ENCODE measurements at regions of chr11 and their contacts with region 1.

Region 1: DNA sequence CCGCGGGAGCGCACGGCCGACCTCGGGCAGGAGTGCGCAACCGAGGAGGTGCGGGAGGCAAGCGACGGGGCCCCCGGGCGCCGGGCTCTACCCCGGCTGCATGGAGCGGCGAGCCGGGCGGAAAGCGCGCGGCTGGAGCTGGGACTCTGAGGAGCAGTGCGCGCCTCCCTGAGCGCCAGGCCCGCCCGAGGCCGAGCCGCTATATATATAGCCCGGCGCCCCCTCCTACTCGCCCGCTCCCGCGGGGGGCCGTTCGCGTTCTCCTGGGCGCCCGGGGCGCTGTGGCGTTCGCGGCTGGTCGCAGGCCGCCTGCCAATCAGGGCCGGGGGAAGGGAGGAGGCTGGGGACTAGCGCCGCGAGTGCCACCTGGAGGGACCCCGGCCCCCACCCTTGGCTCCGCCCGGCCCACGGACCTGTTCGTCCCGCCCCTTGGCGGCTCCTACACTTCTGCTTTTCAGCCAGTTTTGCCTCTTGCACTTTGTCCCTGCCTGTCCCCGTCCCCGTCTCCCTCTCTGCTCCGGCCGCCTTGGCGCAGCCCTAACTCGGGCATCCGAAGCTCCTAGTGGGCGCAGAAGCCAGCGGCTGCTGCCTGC is at the start of gene FGF4:
- DNase-seq: peak; percentile 21 to 83
- H3K4me3 ChIP-seq: peak within 1 kb of the TSS; percentile 23 to 60 (median 36)
- H3K27ac ChIP-seq: no peak within 1 kb of the TSS
- H3K4me1 ChIP-seq: peaks cover 11 to 36% (median 28%) of the 10 kb centered on the region in 4 experiments
- H3K27me3 ChIP-seq: peaks cover 20 to 50% (median 46%) of the 10 kb centered on the region in 4 experiments
- CTCF ChIP-seq: no peak
- EP300 ChIP-seq: no peak
- POLR2A ChIP-seq: no peak
- RAD21 ChIP-seq: no peak
- total RNA-seq, gene FGF4: 2.0 TPM in 2 replicates

Region 2: GRCh38 chr11:69443138-69443967 is 331.9 kb before region 1 on chr11:
- CTCF ChIA-PET with region 1: no interaction called
- POLR2A ChIA-PET with region 1: no interaction called
- DNase-seq: peak; percentile 70 to 91
- H3K4me3 ChIP-seq: peak overlapping the region in 1 of 4 experiments; percentile 38; a peak in 1 of 8 replicates
- H3K27ac ChIP-seq: 0 out of 2 replicates have a peak overlapping the region, but pooled peaks have one; percentile 3
- H3K4me1 ChIP-seq: peaks cover 13 to 37% (median 33%) of the 10 kb centered on the region in 4 experiments
- H3K27me3 ChIP-seq: no peaks in the 10 kb centered on the region; a peak in 2 of 7 replicates
- CTCF ChIP-seq: peak in 1 of 3 experiments; percentile 13; a peak in 1 of 4 replicates
- EP300 ChIP-seq: no peak
- POLR2A ChIP-seq: peak in 1 of 2 experiments; percentile 64; a peak in 1 of 3 replicates
- RAD21 ChIP-seq: peak in 1 of 2 experiments; percentile 0; a peak in 1 of 4 replicates

Region 3: DNA sequence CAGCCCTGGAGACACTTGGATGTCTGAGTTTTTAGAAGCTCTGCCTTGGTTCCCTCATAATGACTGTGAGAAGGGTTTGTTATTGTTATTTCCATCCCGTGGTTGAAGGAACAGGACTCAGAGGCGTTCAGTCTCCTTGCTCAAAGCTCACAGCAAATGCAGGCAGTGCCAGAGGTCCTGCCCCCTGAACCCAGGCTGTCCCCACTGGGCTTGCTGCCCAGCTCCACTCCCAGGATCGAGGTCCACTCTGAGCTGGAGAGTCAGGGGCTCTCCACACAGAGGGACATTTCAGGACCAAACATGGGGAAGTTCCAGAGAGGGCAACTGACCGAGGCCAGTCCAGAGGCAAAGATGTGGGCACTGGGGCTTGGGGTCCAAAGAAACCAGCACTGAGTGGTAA is 14.9 kb before region 1 on chr11:
- CTCF ChIA-PET with region 1: interaction called, 10 read pairs
- POLR2A ChIA-PET with region 1: interaction called, 3 read pairs
- DNase-seq: no peak
- H3K4me3 ChIP-seq: no peak overlapping the region
- H3K27ac ChIP-seq: no peak overlapping the region
- H3K4me1 ChIP-seq: peaks cover 0 to 6% (median 0%) of the 10 kb centered on the region in 4 experiments; a peak in 1 of 7 replicates
- H3K27me3 ChIP-seq: no peaks in the 10 kb centered on the region; a peak in 1 of 7 replicates
- CTCF ChIP-seq: no peak
- EP300 ChIP-seq: no peak
- POLR2A ChIP-seq: no peak
- RAD21 ChIP-seq: no peak

Region 4: GRCh38 chr11:69791276-69792180 is 16.3 kb after region 1 on chr11:
- CTCF ChIA-PET with region 1: interaction called, 17 read pairs
- POLR2A ChIA-PET with region 1: interaction called, 6 read pairs
- DNase-seq: no peak
- H3K4me3 ChIP-seq: no peak overlapping the region
- H3K27ac ChIP-seq: no peak overlapping the region
- H3K4me1 ChIP-seq: peaks cover 0 to 11% (median 2%) of the 10 kb centered on the region in 4 experiments; a peak in 2 of 7 replicates
- H3K27me3 ChIP-seq: no peaks in the 10 kb centered on the region
- CTCF ChIP-seq: no peak
- EP300 ChIP-seq: no peak
- POLR2A ChIP-seq: no peak
- RAD21 ChIP-seq: no peak

Region 5: GRCh38 chr11:69972351-69972802 is 197.1 kb after region 1 on chr11:
- CTCF ChIA-PET with region 1: no interaction called
- POLR2A ChIA-PET with region 1: no interaction called
- DNase-seq: no peak
- H3K4me3 ChIP-seq: no peak overlapping the region
- H3K27ac ChIP-seq: no peak overlapping the region
- H3K4me1 ChIP-seq: peaks cover 0 to 2% (median 0%) of the 10 kb centered on the region in 4 experiments; a peak in 2 of 7 replicates
- H3K27me3 ChIP-seq: peaks cover 0 to 3% (median 0%) of the 10 kb centered on the region in 4 experiments; a peak in 1 of 7 replicates
- CTCF ChIP-seq: no peak
- EP300 ChIP-seq: no peak
- POLR2A ChIP-seq: no peak
- RAD21 ChIP-seq: no peak

Region 6: GRCh38 chr11:70448983-70449567 is 673.8 kb after region 1 on chr11:
- CTCF ChIA-PET with region 1: no interaction called
- POLR2A ChIA-PET with region 1: no interaction called
- DNase-seq: no peak
- H3K4me3 ChIP-seq: no peak overlapping the region
- H3K27ac ChIP-seq: no peak overlapping the region
- H3K4me1 ChIP-seq: no peaks in the 10 kb centered on the region
- H3K27me3 ChIP-seq: no peaks in the 10 kb centered on the region
- CTCF ChIP-seq: peak; percentile 76 to 84 (median 79)
- EP300 ChIP-seq: no peak
- POLR2A ChIP-seq: no peak
- RAD21 ChIP-seq: peak; percentile 81 to 85

Measured in H1 (cell line).